Activated CD4-positive, alpha-beta T cell treated with anti-CD3 and anti-CD28 coated beads for 36 hours (primary cell): ENCODE measurements at regions of chr1 and their contacts with region 1.

Region 1: DNA sequence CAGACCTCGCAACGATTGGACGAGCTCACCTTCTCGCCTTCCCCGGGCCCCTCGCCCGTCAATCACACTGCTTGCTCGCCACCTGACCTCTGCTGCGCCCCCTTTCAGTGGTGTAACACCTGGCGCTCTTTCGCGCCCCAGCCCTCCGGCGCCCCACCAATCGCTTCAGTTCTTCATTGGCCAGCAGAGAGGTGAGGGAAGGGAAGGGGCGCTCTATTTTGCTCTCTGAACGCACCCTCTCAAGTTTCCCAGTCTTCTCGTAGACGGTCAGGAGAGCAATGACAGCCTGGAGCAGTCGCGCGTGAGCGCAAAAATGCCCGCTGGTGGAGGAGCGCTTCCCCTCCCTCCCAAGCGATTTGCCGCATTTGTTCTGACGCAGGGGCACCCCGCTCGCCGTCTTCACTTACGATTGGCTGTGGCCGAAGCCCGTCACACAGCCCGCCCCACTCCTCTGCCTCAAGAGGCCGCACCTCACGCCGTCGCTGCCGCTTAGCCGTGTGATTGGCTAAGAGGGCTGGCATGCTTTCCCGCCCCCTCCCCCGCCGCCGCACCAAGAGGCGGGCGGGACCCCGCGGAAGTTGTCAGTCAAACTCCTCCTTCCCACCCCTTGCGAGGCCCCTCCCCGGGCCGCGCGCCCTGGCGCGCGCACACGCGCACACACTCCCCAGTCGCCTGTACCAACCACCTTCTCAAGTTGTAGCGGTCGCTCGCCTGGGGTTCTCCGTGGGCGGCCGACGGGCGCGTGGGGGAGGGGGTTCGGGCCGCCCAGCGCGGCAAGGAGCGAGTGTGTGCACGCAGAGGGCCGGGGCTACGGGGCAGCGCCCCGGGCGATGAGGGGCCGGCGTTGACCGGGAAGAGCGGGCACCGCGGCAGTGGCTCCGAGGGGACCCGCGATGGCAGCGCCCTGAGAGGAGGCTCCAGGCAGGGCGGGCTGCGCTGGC is at the start of gene PPP2R5A:
- DNase-seq: peak; percentile 99
- ATAC-seq: peak; percentile 93
- H3K4me3 Mint-ChIP-seq: peak within 1 kb of the TSS; percentile 92
- H3K27ac Mint-ChIP-seq: peak within 1 kb of the TSS; percentile 96
- H3K4me1 Mint-ChIP-seq: peaks cover 32% of the 10 kb centered on the region
- H3K27me3 Mint-ChIP-seq: no peaks in the 10 kb centered on the region
- total RNA-seq, gene PPP2R5A: 32.3 to 36.1 TPM

Region 2: DNA sequence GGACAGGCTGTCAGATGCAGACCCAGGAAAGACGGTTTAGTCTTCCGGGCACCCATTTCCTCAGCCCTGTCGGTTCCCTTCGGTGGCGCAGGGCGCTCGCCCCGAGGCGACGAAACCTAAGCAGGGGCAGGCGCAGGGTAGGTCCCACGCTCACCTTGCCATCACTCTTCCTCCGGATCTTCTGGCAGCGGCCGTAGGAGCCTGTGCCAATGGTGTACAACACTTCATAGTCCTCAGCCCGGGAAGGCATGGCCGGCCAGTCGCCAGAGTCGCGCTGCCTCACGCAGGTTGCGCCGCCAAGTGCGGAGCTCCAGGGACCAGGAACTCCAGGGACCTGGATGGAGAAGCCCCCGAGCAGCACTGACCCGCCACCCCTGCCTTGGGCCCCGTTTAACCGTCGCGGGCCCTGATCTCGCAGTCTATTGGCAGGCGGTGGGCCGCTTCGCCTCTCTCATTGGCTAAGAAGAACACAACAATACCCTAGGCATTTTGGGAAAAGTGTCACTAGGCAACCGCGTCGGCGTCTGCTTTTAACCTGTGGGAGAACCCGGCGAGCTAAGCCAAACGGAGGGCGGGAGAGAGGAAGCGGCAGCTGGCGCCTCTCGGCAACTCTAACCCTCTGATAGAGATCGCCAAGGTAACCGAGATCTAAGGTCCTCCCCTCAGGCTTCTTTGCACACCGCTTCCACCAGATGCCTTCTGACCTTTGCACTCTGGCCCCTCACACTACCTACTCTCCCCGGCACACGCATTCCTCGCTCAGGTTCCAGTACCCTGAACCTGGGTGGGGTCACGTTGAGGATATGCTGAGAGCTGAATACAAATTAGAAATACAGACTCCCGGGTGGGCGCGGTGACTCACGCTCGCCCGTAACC is 609.5 kb before region 1 on chr1 and contains the start of gene NEK2:
- CTCF ChIA-PET with region 1: no interaction called
- POLR2A ChIA-PET with region 1: no interaction called
- intact Hi-C with region 1: loop called in 1 of 2 experiments (anchors 1 kb)
- DNase-seq: peak; percentile 94
- ATAC-seq: peak; percentile 98
- H3K4me3 Mint-ChIP-seq: peak within 1 kb of the TSS; percentile 94
- H3K27ac Mint-ChIP-seq: peak within 1 kb of the TSS; percentile 84
- H3K4me1 Mint-ChIP-seq: peaks cover 6% of the 10 kb centered on the region
- H3K27me3 Mint-ChIP-seq: no peaks in the 10 kb centered on the region
- total RNA-seq, gene NEK2: 32.3 to 38.8 TPM

Region 3: GRCh38 chr1:212062832-212063438 is 222.1 kb before region 1 on chr1:
- CTCF ChIA-PET with region 1: interaction called, 3 read pairs
- POLR2A ChIA-PET with region 1: no interaction called
- intact Hi-C with region 1: loop called in 1 of 2 experiments (anchors 2 kb)
- DNase-seq: no peak
- ATAC-seq: no peak
- H3K4me3 Mint-ChIP-seq: no peak overlapping the region
- H3K27ac Mint-ChIP-seq: no peak overlapping the region
- H3K4me1 Mint-ChIP-seq: no peaks in the 10 kb centered on the region
- H3K27me3 Mint-ChIP-seq: no peaks in the 10 kb centered on the region

Region 4: DNA sequence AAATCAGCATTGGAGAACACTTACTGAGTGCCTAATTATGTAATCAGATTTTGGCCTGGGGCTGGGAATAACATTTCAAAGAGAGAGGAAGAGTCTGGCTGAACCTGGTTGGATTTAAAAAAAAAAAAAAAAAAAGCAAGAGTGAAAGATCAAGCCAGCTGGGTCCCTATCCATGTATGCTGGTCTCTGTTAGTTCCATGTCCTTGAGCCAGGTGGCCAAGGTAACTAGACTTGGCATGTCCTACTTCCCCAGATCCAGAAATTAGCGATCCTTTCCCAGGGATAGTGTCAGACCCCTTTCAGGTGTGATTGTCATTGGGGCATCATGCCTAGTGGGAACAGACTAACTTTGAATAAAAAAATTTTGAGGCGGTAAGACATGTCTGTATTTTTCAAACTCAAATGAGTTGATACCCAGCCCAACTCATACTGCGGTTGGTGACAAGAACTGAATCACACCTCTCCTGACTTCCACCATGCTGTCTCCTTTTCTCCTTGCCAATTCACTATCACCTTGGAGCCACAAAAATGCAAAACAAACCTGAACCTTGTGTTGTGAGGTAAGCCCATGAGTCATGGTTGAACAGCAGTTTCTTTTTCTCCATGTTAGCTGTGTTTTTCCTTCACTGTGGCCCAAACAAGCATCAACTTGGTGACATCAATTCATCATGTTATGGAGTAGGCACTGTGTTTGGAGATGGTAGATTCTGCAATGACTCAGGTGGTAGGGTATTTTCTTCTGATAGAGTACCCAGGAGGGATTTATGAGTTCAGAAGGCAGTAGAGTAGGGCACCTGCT is 24.3 kb before region 1 on chr1:
- CTCF ChIA-PET with region 1: no interaction called
- POLR2A ChIA-PET with region 1: no interaction called
- intact Hi-C with region 1: loop called in 1 of 2 experiments (anchors 1 kb)
- DNase-seq: peak; percentile 29
- ATAC-seq: peak; percentile 90
- H3K4me3 Mint-ChIP-seq: no peak overlapping the region
- H3K27ac Mint-ChIP-seq: peak overlapping the region; percentile 64
- H3K4me1 Mint-ChIP-seq: peaks cover 39% of the 10 kb centered on the region
- H3K27me3 Mint-ChIP-seq: no peaks in the 10 kb centered on the region

Region 5: DNA sequence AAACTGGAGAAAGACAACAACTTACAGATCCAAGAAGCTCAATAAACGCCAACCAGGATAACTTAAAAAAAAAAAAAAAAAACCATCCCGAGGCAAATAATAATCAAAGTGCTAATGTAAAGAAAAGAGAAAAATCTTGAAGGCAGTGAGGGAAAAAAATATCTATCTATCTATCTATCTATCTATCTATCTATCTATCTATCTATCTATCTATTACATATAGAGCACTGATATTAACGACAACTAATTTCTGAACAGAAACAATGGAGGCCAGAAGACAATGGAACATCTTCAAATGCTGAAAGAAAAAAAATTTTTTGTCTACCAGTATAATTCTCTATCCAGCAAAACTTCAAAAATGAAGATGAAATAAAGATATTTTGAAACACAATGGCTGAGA is 111.6 kb after region 1 on chr1:
- CTCF ChIA-PET with region 1: no interaction called
- POLR2A ChIA-PET with region 1: no interaction called
- intact Hi-C with region 1: no loop called
- DNase-seq: no peak
- ATAC-seq: no peak
- H3K4me3 Mint-ChIP-seq: no peak overlapping the region
- H3K27ac Mint-ChIP-seq: no peak overlapping the region
- H3K4me1 Mint-ChIP-seq: no peaks in the 10 kb centered on the region
- H3K27me3 Mint-ChIP-seq: no peaks in the 10 kb centered on the region

Region 6: GRCh38 chr1:212414328-212415106 is 129.5 kb after region 1 on chr1 and contains the start of gene PACC1:
- CTCF ChIA-PET with region 1: no interaction called
- POLR2A ChIA-PET with region 1: no interaction called
- intact Hi-C with region 1: loop called (anchors 1 kb)
- DNase-seq: peak; percentile 93
- ATAC-seq: peak; percentile 98
- H3K4me3 Mint-ChIP-seq: peak within 1 kb of the TSS; percentile 93
- H3K27ac Mint-ChIP-seq: peak within 1 kb of the TSS; percentile 92
- H3K4me1 Mint-ChIP-seq: peaks cover 22% of the 10 kb centered on the region
- H3K27me3 Mint-ChIP-seq: no peaks in the 10 kb centered on the region
- total RNA-seq, gene PACC1: 9.2 to 13.8 TPM

Region 7: DNA sequence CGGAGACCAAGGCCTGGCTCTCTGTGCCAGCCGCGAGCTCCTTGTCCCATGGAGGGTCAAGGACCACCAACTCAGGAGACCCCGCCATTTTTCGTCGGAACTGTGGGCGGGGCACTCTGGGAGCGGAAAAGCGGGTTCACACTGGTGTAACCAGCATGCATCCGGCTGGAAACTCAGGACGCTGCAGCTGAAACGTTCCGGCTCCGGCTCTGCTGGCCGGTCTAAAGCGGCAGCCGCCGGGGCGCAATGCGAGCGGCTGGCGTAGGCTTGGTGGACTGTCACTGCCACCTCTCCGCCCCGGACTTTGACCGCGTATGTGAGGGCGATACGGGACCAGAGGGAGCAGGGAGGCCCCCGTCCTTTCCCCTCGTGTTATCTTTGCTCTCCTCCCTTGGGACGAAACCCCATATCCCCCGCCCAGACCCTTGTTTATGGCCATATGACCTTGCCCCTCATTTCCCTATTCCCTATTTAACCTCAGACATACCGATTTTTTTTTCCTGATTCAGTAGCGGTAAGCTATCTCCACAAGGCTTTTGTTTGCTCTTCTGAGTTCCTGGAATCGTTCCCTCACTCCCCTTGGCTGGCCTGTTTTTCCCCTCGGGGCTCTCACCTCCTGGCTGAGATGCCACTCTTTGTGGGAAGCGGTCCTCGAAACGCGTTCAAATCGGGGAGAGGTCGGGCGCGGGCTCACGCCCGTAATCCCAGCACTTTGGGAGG is 506.8 kb after region 1 on chr1 and contains the starts of genes NSL1 and TATDN3:
- CTCF ChIA-PET with region 1: no interaction called
- POLR2A ChIA-PET with region 1: no interaction called
- intact Hi-C with region 1: loop called in 1 of 2 experiments (anchors 2 kb)
- DNase-seq: peak; percentile 95
- ATAC-seq: peak; percentile 89
- H3K4me3 Mint-ChIP-seq: peak within 1 kb of the TSS; percentile 99
- H3K27ac Mint-ChIP-seq: peak within 1 kb of the TSS; percentile 94
- H3K4me1 Mint-ChIP-seq: peaks cover 43% of the 10 kb centered on the region
- H3K27me3 Mint-ChIP-seq: no peaks in the 10 kb centered on the region
- total RNA-seq, gene NSL1: 39.2 to 40.9 TPM
- total RNA-seq, gene TATDN3: 13.8 to 15.2 TPM